PC-9 (cell line): ENCODE measurements at regions of chr5 and their contacts with region 1.

Region 1: DNA sequence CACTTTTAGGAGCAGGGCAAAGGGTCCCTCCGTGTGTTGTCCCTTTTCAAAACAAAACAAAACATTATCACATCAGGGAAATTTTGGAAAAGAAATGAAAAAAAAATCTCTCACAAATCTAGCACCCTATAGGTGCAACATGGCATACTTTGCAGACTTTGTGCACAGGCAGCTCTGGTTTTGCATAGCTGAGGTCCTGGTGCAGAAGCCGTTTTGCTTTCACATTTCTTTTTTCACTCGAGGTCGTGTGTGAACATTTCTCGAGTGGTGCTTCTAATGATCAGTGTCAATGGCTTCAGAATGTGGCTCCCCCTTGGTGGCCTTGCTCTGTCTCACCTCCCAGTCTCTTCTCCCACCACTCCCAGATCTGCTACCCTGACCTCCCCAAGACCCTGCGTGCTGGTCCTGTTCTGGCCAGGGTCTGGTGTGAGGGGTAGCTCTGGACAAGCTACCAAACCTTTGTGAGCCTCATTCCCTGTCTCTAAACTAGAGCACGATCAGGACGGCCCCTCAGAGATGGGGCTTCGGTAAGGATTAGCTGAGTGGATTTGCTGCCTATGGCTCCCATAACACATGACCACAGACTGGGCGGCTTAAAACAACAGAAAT is 258.0 kb downstream of the NSG2 start:
- DNase-seq: no peak
- H3K4me3 ChIP-seq: no peak overlapping the region
- H3K27ac ChIP-seq: no peak overlapping the region
- H3K4me1 ChIP-seq: no peaks in the 10 kb centered on the region
- H3K27me3 ChIP-seq: peaks cover 90% of the 10 kb centered on the region
- CTCF ChIP-seq: no peak

Region 2: DNA sequence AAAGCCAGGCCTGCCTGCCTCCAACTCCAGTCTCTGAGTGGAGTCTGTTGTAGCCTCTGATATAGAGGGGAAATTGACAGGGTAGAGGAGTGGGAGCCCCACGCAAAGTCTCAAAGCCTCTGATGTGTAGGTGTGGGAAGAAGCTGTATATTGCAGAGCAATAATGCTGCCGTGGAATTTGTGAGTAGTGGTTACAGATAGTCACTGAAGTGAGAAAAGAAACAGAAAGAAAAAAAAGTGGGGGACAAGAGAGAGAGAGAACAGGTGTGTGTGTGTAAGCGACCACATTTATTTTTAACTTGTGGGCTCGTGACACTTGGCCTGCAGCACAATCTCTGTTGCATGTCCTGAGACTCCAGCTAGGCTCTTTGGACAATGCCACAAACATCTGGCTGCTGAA is 30.2 kb before region 1 on chr5:
- CTCF ChIA-PET with region 1: no interaction called
- POLR2A ChIA-PET with region 1: no interaction called
- intact Hi-C with region 1: loop called (anchors 1 kb)
- DNase-seq: no peak
- H3K4me3 ChIP-seq: no peak overlapping the region
- H3K27ac ChIP-seq: no peak overlapping the region
- H3K4me1 ChIP-seq: no peaks in the 10 kb centered on the region
- H3K27me3 ChIP-seq: peaks cover 44% of the 10 kb centered on the region
- CTCF ChIP-seq: no peak